Activated B cell treated with CpG ODN at 0.5 μM for 24 hours (primary cell): ENCODE measurements at regions of chr17 and their contacts with region 1.

Region 1: GRCh38 chr17:59004338-59005111 is 102.2 kb downstream of the TRIM37 start:
- DNase-seq: peak; percentile 35
- ATAC-seq: peak; percentile 35
- H3K4me3 Mint-ChIP-seq: no peak overlapping the region
- H3K27ac Mint-ChIP-seq: peak overlapping the region; percentile 79
- H3K4me1 Mint-ChIP-seq: peaks cover 29% of the 10 kb centered on the region
- H3K27me3 Mint-ChIP-seq: no peaks in the 10 kb centered on the region
- CTCF ChIP-seq: no peak

Region 2: DNA sequence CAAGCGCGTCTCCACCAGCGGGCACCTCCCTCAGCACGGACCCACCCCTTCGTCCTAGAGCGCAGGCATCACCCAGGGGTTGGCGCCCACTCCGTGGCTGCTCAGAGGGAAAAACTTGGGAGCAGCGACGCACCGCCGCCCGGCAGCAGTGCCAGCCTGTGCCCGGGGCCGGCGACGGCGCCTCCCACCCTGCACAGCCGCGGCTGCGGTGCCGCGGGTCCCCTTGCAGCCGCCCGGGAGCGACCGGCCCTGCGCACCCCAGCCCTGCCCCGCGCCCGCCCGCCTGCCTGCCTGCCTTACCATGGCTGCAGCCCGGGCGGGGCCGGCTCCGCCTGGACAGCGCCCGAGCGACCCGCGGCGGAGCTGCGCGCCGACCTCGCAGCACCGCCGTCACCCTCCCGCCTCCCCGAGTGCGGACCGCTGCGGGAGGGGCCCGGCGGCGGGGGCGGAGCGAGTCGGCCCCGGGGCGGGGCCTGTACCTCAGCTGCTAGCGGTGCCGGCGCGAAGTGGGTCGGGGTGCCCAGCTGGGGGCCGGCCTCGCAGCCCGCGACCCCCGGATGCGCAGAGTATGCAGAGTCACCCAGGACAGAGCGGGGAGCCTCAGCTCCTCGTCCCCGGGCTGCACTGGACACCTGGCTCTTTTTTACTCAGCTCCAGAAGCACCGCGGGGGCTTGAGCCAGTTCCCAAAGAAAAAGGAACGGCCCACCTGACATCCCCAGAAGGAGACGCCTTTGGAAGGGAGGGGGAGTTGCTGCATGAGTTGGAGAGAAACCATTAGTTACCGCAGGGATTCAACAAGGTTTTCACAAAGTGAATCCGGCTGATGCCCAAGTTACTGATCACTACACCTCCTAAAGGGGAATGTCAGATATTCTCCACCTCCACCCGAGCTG is 472.6 kb before region 1 on chr17:
- CTCF ChIA-PET with region 1: no interaction called
- POLR2A ChIA-PET with region 1: no interaction called
- intact Hi-C with region 1: loop called (anchors 5 kb)
- DNase-seq: peak; percentile 70
- ATAC-seq: peak; percentile 97
- H3K4me3 Mint-ChIP-seq: peak overlapping the region; percentile 63
- H3K27ac Mint-ChIP-seq: no peak overlapping the region
- H3K4me1 Mint-ChIP-seq: peaks cover 6% of the 10 kb centered on the region
- H3K27me3 Mint-ChIP-seq: peaks cover 30% of the 10 kb centered on the region
- CTCF ChIP-seq: no peak

Region 3: GRCh38 chr17:58587702-58588254 is 416.7 kb before region 1 on chr17:
- CTCF ChIA-PET with region 1: interaction called, 37 read pairs
- POLR2A ChIA-PET with region 1: interaction called, 16 read pairs
- intact Hi-C with region 1: loop called (anchors 1 kb)
- DNase-seq: peak; percentile 21
- ATAC-seq: peak; percentile 86
- H3K4me3 Mint-ChIP-seq: no peak overlapping the region
- H3K27ac Mint-ChIP-seq: no peak overlapping the region
- H3K4me1 Mint-ChIP-seq: peaks cover 3% of the 10 kb centered on the region
- H3K27me3 Mint-ChIP-seq: no peaks in the 10 kb centered on the region
- CTCF ChIP-seq: no peak

Region 4: DNA sequence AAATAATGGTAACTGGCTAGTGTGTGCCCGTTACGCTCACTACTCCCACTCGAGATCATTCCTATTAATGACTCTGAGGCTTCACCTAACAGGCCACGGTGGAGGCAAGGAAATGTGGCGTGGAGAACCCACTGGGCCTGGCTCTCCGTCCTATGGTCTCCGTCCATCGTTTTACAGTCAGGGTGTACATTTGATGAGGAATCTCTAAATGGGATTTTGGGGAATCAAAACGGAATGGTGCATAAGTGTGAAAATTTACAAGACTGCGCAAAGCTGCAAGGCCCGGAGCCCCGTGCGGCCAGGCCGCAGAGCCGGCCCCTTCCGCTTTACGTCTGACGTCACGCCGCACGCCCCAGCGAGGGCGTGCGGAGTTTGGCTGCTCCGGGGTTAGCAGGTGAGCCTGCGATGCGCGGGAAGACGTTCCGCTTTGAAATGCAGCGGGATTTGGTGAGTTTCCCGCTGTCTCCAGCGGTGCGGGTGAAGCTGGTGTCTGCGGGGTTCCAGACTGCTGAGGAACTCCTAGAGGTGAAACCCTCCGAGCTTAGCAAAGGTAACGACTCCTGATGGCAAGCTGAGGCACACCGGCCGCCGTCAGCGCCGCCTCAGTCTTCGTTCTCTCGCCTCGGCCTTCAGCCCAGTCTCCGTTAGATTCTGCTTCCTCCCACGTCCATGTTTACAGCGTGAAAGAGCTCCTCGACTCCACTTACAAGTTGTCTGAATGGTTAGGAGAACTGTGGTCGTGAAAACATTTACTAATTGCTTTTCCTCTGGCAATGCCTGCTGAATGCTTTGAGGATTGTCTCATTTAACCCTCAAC is 312.1 kb before region 1 on chr17 and contains the start of gene RAD51C:
- CTCF ChIA-PET with region 1: interaction called, 7 read pairs
- POLR2A ChIA-PET with region 1: interaction called, 7 read pairs
- intact Hi-C with region 1: loop called (anchors 1 kb)
- DNase-seq: peak; percentile 83
- ATAC-seq: peak; percentile 98
- H3K4me3 Mint-ChIP-seq: peak within 1 kb of the TSS; percentile 94
- H3K27ac Mint-ChIP-seq: peak within 1 kb of the TSS; percentile 89
- H3K4me1 Mint-ChIP-seq: peaks cover 22% of the 10 kb centered on the region
- H3K27me3 Mint-ChIP-seq: no peaks in the 10 kb centered on the region
- CTCF ChIP-seq: no peak
- total RNA-seq, gene RAD51C: 32.8 and 36.8 TPM in 2 replicates

Region 5: GRCh38 chr17:58843534-58843933 is 161.0 kb before region 1 on chr17:
- CTCF ChIA-PET with region 1: no interaction called
- POLR2A ChIA-PET with region 1: no interaction called
- intact Hi-C with region 1: no loop called
- DNase-seq: no peak
- ATAC-seq: no peak
- H3K4me3 Mint-ChIP-seq: no peak overlapping the region
- H3K27ac Mint-ChIP-seq: no peak overlapping the region
- H3K4me1 Mint-ChIP-seq: no peaks in the 10 kb centered on the region
- H3K27me3 Mint-ChIP-seq: peaks cover 2% of the 10 kb centered on the region
- CTCF ChIP-seq: no peak

Region 6: DNA sequence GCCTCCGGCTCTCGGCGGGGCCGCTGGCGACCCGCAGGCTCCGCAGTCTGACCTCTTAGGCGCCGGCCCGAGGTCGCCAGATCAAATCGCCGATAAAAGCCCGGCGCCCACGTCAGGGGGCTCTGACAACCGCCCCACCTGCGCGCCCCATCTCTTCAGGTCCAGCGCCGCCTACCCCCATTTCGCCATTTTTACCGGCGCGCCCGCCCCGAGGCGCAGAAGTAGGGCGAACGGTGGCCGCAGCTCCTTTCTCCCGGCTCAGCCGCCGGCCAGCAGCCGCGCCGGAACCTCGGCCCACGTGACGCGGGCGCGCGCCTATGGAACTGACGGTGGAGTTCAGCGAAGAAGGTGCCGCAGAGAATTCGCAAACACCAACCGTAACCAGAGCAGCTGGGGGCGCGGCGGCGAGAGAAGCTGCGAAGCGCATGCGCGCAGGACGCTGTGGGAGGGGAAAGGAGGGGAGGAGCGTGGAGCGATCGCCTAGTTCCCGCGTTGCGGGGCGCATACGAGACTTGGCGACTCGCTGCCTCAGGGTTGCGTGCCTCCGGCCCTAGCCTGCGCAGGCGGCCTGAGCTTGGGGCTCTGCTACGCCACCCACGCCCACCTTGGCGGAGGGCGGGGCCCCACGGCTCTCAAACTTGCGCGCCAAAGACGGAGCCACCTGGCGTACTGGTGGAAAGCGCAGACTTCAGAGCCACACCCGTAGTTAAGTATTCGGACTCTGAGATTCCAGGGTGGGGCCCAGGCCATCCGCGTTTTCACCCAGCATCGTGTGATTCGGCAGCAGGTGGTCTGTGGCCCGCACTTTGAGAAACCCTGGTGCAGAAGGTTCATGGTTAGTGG is 102.2 kb after region 1 on chr17 and contains the start of gene TRIM37:
- CTCF ChIA-PET with region 1: no interaction called
- POLR2A ChIA-PET with region 1: no interaction called
- intact Hi-C with region 1: loop called (anchors 1 kb)
- DNase-seq: peak; percentile 98
- ATAC-seq: peak; percentile 96
- H3K4me3 Mint-ChIP-seq: peak within 1 kb of the TSS; percentile 94
- H3K27ac Mint-ChIP-seq: peak within 1 kb of the TSS; percentile 82
- H3K4me1 Mint-ChIP-seq: peaks cover 28% of the 10 kb centered on the region
- H3K27me3 Mint-ChIP-seq: no peaks in the 10 kb centered on the region
- CTCF ChIP-seq: no peak
- total RNA-seq, gene TRIM37: 16.4 and 17.3 TPM in 2 replicates

Region 7: GRCh38 chr17:60652454-60653247 is 1648.1 kb after region 1 on chr17:
- CTCF ChIA-PET with region 1: no interaction called
- POLR2A ChIA-PET with region 1: interaction called, 12 read pairs
- intact Hi-C with region 1: no loop called
- DNase-seq: no peak
- ATAC-seq: peak; percentile 100
- H3K4me3 Mint-ChIP-seq: peak overlapping the region; percentile 41
- H3K27ac Mint-ChIP-seq: peak overlapping the region; percentile 15
- H3K4me1 Mint-ChIP-seq: peaks cover 25% of the 10 kb centered on the region
- H3K27me3 Mint-ChIP-seq: no peaks in the 10 kb centered on the region
- CTCF ChIP-seq: no peak